OCI-LY7 (cell line): ENCODE measurements at regions of chr3 and their contacts with region 1.

Region 1: DNA sequence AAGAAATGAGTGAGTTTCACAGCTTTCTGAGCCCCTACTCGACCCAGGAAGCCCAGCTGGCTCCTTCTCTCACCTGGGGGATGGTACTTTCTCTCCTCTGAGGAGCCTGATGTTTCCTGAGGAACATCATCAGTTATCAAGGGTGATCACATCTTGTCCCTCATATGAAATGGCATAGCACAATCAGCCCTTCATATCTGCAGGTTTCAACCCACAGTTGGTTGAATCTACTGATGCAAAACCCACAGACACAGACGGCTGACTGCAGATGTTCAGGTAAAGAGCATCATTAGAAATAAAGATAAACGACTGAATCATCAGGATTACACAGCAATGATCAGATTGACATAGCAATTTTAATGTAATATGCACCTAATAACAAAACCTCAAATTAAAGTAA is 93.6 kb upstream of the OSTN start:
- DNase-seq: peak; percentile 96
- H3K4me3 ChIP-seq: peak overlapping the region; percentile 37
- H3K27ac ChIP-seq: peak overlapping the region; percentile 93
- H3K4me1 ChIP-seq: peaks cover 39% of the 10 kb centered on the region
- CTCF ChIP-seq: no peak

Region 2: GRCh38 chr3:190941694-190942260 is 163.6 kb before region 1 on chr3:
- CTCF ChIA-PET with region 1: no interaction called
- POLR2A ChIA-PET with region 1: no interaction called
- intact Hi-C with region 1: no loop called
- DNase-seq: no peak
- H3K4me3 ChIP-seq: no peak overlapping the region
- H3K27ac ChIP-seq: no peak overlapping the region
- H3K4me1 ChIP-seq: no peaks in the 10 kb centered on the region
- CTCF ChIP-seq: no peak

Region 3: DNA sequence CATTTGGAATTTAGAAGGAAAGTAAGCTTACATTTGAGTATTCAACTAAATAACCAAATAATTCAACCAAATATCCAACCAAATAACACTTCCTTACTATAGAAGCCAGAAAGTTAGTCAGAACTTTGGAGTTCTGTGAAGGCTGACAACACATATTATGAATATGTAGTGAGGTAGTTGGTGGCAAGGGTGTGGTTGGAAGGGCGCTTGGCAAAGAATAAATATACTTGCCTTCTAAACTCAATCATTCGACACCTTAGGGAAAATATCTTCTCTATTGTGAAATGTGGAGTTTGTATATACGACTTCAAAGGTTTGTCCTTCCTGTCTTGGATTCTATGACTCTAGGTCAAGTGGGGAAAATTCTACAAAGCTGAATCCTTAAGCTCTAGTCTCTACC is 18.0 kb before region 1 on chr3:
- CTCF ChIA-PET with region 1: no interaction called
- POLR2A ChIA-PET with region 1: interaction called, 43 read pairs
- intact Hi-C with region 1: no loop called
- DNase-seq: no peak
- H3K4me3 ChIP-seq: no peak overlapping the region
- H3K27ac ChIP-seq: no peak overlapping the region
- H3K4me1 ChIP-seq: no peaks in the 10 kb centered on the region
- CTCF ChIP-seq: no peak

Region 4: DNA sequence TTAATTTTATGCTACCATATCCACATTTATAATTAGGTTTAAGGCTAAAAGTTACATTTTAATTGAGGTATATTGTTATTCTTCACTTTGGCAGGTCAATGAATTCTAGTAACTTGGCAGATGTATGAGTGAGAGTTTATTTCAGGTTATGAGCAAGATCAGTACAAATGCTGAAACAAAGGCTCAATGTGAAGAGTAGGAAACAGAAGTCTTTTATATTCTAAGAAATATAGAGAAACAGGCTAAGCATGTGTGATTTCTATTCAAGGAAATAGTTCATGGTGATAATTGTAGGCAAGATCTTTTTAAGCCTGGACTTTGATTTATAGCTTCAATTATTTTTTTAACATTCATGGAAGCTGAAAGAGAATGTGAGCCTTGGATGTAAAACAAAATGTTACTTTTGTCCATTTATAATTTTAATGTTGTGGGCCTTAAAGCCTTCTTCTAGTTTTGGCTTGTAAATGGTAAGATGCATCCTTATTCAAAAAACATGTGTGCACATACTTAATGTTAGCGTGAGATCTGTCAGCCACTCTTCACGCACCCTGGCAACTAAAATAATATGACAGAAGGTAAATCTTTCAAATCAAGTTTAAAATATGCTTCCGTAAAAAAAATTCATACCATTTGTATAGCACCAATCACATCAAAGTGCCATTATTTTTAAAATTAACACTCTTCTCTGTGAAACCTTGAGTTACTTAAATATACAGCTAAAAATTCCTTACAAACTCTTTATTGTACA is 70.8 kb after region 1 on chr3:
- CTCF ChIA-PET with region 1: no interaction called
- POLR2A ChIA-PET with region 1: interaction called, 4 read pairs
- intact Hi-C with region 1: loop called (anchors 5 kb)
- DNase-seq: no peak
- H3K4me3 ChIP-seq: no peak overlapping the region
- H3K27ac ChIP-seq: no peak overlapping the region
- H3K4me1 ChIP-seq: peaks cover 12% of the 10 kb centered on the region
- CTCF ChIP-seq: no peak

Region 5: GRCh38 chr3:191296041-191296541 is 190.7 kb after region 1 on chr3:
- CTCF ChIA-PET with region 1: no interaction called
- POLR2A ChIA-PET with region 1: no interaction called
- intact Hi-C with region 1: loop called (anchors 1 kb)
- DNase-seq: peak; percentile 96
- H3K4me3 ChIP-seq: peak overlapping the region; percentile 45
- H3K27ac ChIP-seq: peak overlapping the region; percentile 94
- H3K4me1 ChIP-seq: peaks cover 87% of the 10 kb centered on the region
- CTCF ChIP-seq: no peak

Region 6: DNA sequence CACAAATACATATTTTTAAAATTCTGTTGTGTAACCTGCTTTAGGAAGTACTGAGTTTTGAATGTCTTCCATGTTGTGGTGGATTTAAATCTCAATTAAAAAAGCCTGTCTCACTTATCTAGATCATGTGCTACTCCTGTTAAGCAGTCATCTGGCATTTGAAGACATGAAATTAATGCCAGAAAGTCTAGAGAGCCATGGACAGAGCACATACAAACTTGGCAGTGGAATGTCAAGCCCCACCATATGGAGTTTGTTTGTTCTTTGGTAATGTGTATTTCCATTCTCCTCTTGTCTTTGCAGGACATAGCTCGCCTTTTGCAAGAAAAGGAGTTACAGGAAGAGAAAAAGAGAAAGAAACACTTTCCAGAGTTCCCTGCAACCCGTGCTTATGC is 264.2 kb after region 1 on chr3:
- CTCF ChIA-PET with region 1: no interaction called
- POLR2A ChIA-PET with region 1: no interaction called
- intact Hi-C with region 1: no loop called
- DNase-seq: no peak
- H3K4me3 ChIP-seq: no peak overlapping the region
- H3K27ac ChIP-seq: no peak overlapping the region
- H3K4me1 ChIP-seq: peaks cover 7% of the 10 kb centered on the region
- CTCF ChIP-seq: no peak

Region 7: GRCh38 chr3:192042116-192042515 is 936.7 kb after region 1 on chr3:
- CTCF ChIA-PET with region 1: no interaction called
- POLR2A ChIA-PET with region 1: no interaction called
- intact Hi-C with region 1: loop called (anchors 10 kb)
- DNase-seq: peak; percentile 91
- H3K4me3 ChIP-seq: peak overlapping the region; percentile 6
- H3K27ac ChIP-seq: peak overlapping the region; percentile 85
- H3K4me1 ChIP-seq: peaks cover 56% of the 10 kb centered on the region
- CTCF ChIP-seq: no peak

Region 8: GRCh38 chr3:192188218-192188835 is 1082.9 kb after region 1 on chr3:
- CTCF ChIA-PET with region 1: no interaction called
- POLR2A ChIA-PET with region 1: no interaction called
- intact Hi-C with region 1: loop called (anchors 10 kb)
- DNase-seq: peak; percentile 79
- H3K4me3 ChIP-seq: no peak overlapping the region
- H3K27ac ChIP-seq: no peak overlapping the region
- H3K4me1 ChIP-seq: peaks cover 45% of the 10 kb centered on the region
- CTCF ChIP-seq: peak; percentile 94